Natural killer cell (primary cell): ENCODE measurements at regions of chr7 and their contacts with region 1.

Region 1: DNA sequence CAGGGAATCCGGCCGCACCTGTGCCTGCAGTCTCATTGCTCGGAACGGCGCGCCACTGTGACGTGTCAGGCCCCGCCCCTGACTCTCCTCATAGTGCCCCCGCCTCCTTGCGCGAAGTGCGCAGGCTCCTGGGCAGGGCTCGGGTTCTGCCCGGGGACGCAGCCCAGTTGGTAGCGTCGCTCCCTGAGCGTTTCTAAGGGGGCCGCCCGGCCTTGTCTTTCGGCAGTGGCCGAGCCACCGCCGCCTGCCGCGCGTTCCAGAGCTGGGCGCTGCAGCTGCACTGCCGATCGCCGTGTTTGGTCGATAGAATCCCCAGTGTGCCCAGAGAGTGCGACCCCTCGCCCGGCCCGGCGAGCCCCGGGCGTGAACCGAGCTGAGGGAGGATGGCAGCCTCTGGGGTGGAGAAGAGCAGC is at the start of gene KLHL7:
- DNase-seq: peak; percentile 97
- ATAC-seq: peak; percentile 95 to 99 (median 96)
- H3K4me3 ChIP-seq: peak within 1 kb of the TSS; percentile 72
- H3K4me3 Mint-ChIP-seq: peak within 1 kb of the TSS; percentile 97
- H3K27ac ChIP-seq: peak within 1 kb of the TSS; percentile 87
- H3K27ac Mint-ChIP-seq: peak within 1 kb of the TSS; percentile 97 to 98
- H3K4me1 ChIP-seq: peaks cover 10% of the 10 kb centered on the region
- H3K4me1 Mint-ChIP-seq: peaks cover 39 to 42% of the 10 kb centered on the region in 2 donors
- H3K27me3 ChIP-seq: no peaks in the 10 kb centered on the region
- H3K27me3 Mint-ChIP-seq: no peaks in the 10 kb centered on the region
- CTCF ChIP-seq: no peak
- total RNA-seq, gene KLHL7: 13.9 to 19.1 (median 14.5) TPM

Region 2: DNA sequence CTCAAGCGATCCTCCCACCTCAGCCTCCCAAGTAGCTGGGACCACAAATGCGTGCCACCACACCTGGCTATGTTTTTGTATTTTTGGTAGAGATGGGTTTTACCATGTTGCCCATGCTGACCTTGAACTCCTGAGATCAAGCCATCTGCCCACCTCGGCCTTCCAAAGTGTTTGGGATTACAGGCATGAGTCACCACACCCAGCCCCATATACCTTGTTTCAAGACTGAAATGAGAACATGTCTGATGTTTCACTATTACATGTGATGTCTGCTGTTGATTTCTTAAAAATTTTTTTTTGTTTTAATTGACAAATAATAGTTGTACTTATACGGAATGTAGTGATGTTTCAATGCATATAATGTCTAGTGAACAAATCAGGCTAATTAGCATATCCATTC is 14.5 kb after region 1 on chr7:
- intact Hi-C with region 1: no loop called
- DNase-seq: no peak
- ATAC-seq: no peak
- H3K4me3 ChIP-seq: no peak overlapping the region
- H3K4me3 Mint-ChIP-seq: no peak overlapping the region
- H3K27ac ChIP-seq: no peak overlapping the region
- H3K27ac Mint-ChIP-seq: no peak overlapping the region
- H3K4me1 ChIP-seq: no peaks in the 10 kb centered on the region
- H3K4me1 Mint-ChIP-seq: peaks cover 8 to 14% of the 10 kb centered on the region in 2 donors
- H3K27me3 ChIP-seq: no peaks in the 10 kb centered on the region
- H3K27me3 Mint-ChIP-seq: no peaks in the 10 kb centered on the region
- CTCF ChIP-seq: no peak

Region 3: DNA sequence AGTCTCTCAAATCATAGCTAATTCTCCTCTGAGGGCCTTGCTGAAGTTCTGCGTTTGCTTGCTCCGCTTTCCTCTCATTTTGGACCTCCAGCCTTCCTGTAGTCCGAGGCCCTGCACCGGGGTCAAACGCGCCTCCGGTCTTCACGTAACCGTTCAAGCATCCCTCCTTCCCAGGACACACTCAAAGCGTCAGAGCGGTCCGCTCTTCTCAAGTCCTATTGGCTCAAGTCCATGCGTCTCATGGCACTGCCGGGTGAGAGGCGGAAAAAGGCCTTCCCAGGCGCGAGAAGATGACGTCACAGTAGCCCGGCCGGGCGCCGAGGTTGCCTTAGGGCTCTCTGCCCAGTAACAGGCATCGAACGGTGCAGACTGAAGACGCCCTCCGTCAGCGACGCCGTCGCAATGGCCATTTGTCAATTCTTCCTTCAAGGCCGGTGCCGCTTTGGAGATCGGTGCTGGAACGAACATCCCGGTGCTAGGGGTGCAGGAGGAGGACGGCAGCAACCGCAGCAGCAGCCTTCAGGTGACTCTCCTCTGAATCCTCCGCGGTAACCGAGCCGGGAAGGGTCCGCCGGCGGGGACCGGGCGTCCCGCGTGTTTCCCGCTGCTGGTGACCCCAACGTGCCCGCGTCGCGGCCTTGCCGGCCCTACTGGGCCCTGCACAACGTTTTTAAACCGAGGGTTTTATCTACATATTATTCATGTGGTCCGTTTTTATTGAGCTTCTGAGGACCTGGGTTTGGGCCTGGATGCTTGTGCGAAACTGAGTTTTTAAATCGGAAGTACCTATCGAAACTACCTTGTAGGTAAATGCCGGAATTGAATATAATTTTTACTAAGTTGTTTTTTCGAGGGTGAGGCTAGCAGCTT is 76.3 kb after region 1 on chr7 and contains the start of gene NUP42:
- intact Hi-C with region 1: loop called (anchors 1 kb)
- DNase-seq: peak; percentile 94 to 98
- ATAC-seq: peak; percentile 90 to 98 (median 93)
- H3K4me3 ChIP-seq: peak within 1 kb of the TSS; percentile 87
- H3K4me3 Mint-ChIP-seq: peak within 1 kb of the TSS; percentile 96
- H3K27ac ChIP-seq: peak within 1 kb of the TSS; percentile 93
- H3K27ac Mint-ChIP-seq: peak within 1 kb of the TSS; percentile 99
- H3K4me1 ChIP-seq: peaks cover 18% of the 10 kb centered on the region
- H3K4me1 Mint-ChIP-seq: peaks cover 23 to 29% of the 10 kb centered on the region in 2 donors
- H3K27me3 ChIP-seq: no peaks in the 10 kb centered on the region
- H3K27me3 Mint-ChIP-seq: peaks cover 0 to 3% of the 10 kb centered on the region in 2 donors
- CTCF ChIP-seq: no peak
- total RNA-seq, gene NUP42: 37.5 to 41.6 (median 40.2) TPM